Activated CD8-positive, alpha-beta T cell treated with anti-CD3 and anti-CD28 coated beads, Interleukin-2, amount 10 ng/mL, durations not matched to agents 7 days and 5 days (primary cell): ENCODE measurements at regions of chr19 and their contacts with region 1.

Region 1: GRCh38 chr19:49718511-49718910 is 27.6 kb downstream of the CPT1C start:
- DNase-seq: no peak
- ATAC-seq: no peak
- H3K4me3 Mint-ChIP-seq: peak overlapping the region; percentile 34
- H3K27ac Mint-ChIP-seq: no peak overlapping the region
- H3K4me1 Mint-ChIP-seq: peaks cover 21% of the 10 kb centered on the region
- H3K27me3 Mint-ChIP-seq: no peaks in the 10 kb centered on the region

Region 2: DNA sequence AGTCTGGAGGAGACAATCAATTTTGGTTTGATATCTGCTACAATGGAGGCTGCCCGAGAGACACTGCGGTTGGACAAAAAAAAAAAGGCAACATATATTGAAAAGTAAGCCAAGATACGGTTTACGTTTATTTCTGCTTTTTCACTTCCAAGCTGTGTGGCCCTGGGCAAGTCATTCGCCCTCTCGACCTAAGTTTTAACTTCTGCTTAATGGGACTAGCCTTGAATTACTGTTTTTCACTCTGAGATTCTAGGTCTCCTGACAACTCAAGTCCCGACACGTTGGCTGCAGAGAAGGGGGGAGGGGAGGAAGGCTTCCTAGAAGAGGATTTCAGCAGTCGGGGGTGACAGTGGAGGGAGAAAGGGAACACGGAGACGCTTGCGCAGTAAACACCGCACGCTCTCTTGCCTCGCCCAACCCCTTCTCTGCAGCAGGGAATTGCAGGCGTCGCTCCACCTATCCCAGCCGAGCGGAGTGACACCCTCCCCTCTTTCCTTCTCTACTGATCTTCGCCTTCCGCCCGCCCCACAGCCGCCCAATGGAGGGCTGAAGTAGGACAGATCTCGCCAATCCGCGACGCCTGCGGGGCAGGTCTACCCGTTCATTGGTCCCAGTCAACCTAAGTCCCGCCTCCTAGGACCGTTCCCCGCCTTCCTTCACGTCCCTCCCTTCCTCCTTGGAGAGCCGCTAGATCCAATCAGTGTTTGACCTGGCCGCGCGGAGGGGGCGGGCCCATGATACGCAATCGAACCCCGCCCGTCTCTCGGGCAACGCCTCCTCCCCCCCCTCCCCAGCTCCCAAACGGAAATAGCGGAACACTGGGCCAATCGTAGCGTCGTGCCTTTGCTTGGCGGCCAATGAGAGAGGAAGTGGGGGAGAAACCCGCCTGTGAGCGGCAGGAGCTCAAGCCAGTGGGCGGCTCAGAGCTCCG is 47.8 kb after region 1 on chr19:
- CTCF ChIA-PET with region 1: interaction called, 26 read pairs
- POLR2A ChIA-PET with region 1: interaction called, 4 read pairs
- DNase-seq: peak; percentile 100
- ATAC-seq: peak; percentile 94
- H3K4me3 Mint-ChIP-seq: peak overlapping the region; percentile 96
- H3K27ac Mint-ChIP-seq: peak overlapping the region; percentile 95
- H3K4me1 Mint-ChIP-seq: peaks cover 40% of the 10 kb centered on the region
- H3K27me3 Mint-ChIP-seq: no peaks in the 10 kb centered on the region